Activated CD4-positive, alpha-beta T cell treated with anti-CD3 and anti-CD28 coated beads, Interleukin-2, amount 10 ng/mL, durations not matched to agents 24 days and 14 days (primary cell): ENCODE measurements at regions of chr17 and their contacts with region 1.

Region 1: DNA sequence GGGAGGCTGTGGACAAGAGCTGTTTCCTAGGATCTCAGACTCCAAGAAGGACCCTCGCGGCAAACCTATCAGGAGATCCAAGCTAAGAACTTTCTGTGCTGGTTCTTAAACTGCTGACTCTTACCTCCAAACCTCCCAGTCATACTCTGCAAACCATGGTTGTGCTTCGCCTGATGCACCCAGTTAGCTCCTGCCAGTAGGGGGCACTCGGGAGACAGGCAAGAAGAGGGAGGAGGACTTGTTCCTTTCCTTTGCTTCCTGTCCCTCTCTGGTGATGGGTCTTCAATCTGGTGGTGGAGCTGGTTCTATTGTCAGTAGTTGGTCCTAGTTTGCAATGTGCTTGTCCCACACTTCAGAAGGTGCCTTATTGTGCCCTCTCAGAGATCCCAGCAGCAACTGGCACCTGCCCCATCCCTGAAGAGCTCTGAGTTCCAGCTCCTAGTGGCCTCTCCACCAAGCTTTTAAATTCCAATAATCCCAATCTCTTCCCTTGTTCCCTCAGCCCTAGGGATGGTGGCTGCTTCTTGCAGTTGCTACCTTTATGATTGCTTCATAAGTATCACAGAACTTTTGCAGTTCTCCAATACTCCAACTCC is 113.5 kb upstream of the RPL38 start:
- DNase-seq: peak; percentile 89
- H3K4me3 Mint-ChIP-seq: no peak overlapping the region
- H3K27ac Mint-ChIP-seq: no peak overlapping the region
- H3K4me1 Mint-ChIP-seq: no peaks in the 10 kb centered on the region
- H3K27me3 Mint-ChIP-seq: peaks cover 7% of the 10 kb centered on the region

Region 2: GRCh38 chr17:74126179-74126900 is 36.4 kb after region 1 on chr17:
- intact Hi-C with region 1: no loop called
- DNase-seq: no peak
- H3K4me3 Mint-ChIP-seq: no peak overlapping the region
- H3K27ac Mint-ChIP-seq: no peak overlapping the region
- H3K4me1 Mint-ChIP-seq: no peaks in the 10 kb centered on the region
- H3K27me3 Mint-ChIP-seq: no peaks in the 10 kb centered on the region

Region 3: DNA sequence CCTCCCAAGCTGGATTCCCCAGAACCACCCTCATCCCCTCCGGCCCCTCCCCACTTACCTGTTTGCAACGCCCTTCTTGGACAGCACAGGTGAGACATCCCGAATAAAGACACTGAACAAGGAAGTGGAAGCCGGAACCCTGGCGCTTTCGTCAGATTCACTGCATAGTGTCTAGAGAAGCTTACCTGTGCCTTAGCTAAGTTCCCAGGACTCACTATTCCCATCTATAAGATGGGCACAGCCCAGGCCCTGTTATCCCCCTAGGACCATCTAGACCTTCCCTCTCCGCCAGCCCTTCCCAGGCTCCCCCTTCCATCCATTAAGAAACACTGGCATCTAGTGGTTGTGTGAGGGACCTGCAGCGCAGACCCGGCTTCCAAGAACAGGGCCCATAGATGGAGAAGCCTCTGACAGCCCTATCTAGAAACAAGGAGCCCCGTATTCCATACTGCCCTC is 86.6 kb after region 1 on chr17:
- intact Hi-C with region 1: loop called (anchors 5 kb)
- DNase-seq: peak; percentile 80
- H3K4me3 Mint-ChIP-seq: no peak overlapping the region
- H3K27ac Mint-ChIP-seq: no peak overlapping the region
- H3K4me1 Mint-ChIP-seq: no peaks in the 10 kb centered on the region
- H3K27me3 Mint-ChIP-seq: peaks cover 17% of the 10 kb centered on the region